GM23248 (cell line): ENCODE measurements at regions of chr14 and their contacts with region 1.

Region 1: DNA sequence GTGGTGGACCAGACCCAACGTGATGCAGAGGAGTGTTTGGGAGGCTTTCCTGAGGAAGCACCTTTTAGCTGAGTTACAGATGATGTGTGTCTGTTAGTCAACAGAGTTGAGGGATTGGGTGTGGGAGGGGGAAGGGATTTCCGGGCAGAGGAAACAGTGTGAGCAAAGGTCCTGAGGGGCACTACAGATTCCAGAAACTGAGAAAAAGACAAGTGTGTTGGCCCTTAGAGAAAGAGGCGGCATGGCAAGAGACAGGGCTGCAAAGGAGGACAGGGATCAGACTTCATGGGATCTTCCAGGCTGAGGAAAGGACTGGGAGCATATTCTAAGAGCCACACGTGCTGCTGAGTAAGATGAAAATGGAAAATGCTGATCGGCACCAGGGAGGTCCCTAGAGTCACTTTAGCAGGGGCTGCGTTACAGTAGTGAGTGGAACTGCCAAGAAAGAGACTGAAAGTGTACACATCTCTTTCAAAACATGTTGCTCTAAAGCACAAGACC is 9.4 kb upstream of the RPS6KL1 start:
- DNase-seq: no peak
- H3K4me3 ChIP-seq: no peak overlapping the region
- H3K27ac ChIP-seq: no peak overlapping the region
- H3K4me1 ChIP-seq: no peaks in the 10 kb centered on the region
- H3K27me3 ChIP-seq: no peaks in the 10 kb centered on the region

Region 2: DNA sequence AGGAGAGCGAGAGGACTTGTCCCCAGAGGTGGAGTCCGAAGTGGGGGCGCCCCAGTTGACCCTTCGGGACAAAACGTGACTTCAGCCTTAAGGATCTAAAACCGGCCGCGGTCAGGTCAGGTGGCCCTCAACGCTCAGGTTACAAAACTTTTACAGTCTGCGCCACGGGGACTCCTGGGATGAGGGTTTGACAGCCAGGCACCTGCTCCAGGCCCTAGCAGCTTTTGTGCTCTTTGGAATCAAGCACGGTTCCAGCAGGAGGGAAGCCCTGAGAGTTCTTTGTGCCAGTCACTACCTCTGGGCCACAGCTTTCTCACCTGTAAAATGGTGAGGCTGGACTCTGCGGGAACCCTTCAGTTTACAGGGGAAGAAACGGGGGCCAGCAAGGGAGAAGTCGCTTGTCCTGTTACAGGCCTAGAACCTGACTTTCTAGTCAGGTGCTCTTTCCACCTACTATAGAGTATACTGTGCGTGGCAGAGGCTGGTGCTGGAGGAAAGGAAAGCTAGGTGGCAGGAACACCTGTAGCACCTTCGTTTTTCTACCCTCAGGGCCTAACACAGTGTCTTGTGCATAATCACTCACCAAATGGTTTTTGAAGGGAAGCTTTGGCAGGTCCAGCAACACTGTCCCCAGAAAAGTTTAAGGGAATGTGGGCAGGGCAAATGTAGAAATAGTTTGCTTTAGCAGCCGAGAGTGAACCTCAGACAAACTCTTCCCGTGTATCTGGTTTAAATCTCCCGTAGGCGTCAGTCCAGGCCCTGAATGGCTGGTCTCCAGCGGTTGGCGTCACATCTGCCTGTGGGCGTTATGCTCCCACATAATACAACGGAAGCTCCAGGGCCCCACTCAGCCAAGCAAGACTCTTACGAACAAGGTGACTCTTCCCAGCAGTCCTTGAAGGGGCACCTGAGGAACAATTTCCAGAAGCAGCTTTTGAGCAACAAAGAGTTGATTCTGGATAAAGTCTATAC is 137.6 kb after region 1 on chr14:
- in situ Hi-C with region 1: loop called (anchors 10 kb)
- DNase-seq: peak; percentile 74
- H3K4me3 ChIP-seq: peak overlapping the region; percentile 73
- H3K27ac ChIP-seq: peak overlapping the region; percentile 74
- H3K4me1 ChIP-seq: peaks cover 18% of the 10 kb centered on the region
- H3K27me3 ChIP-seq: no peaks in the 10 kb centered on the region

Region 3: DNA sequence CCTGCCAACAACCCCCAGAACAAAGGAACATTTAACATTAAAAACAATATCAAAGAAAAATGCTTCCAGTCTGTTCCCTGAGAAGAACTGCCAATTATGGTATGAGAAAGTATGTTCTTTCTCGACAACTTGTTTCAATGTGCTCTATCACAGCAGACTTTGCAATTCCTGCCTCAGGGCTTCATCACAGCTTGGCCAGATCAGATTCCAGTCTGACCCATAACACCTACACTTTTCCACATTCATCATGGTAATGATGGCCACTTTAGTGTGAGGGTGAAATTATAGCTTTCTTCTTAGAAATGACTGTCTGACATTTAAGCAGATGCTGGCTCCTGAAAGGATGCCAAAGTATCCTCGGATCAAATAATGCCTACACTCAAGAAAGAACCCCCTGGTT is 177.4 kb after region 1 on chr14:
- in situ Hi-C with region 1: no loop called
- DNase-seq: no peak
- H3K4me3 ChIP-seq: no peak overlapping the region
- H3K27ac ChIP-seq: no peak overlapping the region
- H3K4me1 ChIP-seq: no peaks in the 10 kb centered on the region
- H3K27me3 ChIP-seq: no peaks in the 10 kb centered on the region